CD8-positive, alpha-beta T cell (primary cell): ENCODE measurements at regions of chr3 and their contacts with region 1.

Region 1: GRCh38 chr3:47989981-47990440 is 26.2 kb downstream of the MAP4 start:
- DNase-seq: peak; percentile 27 to 84 (median 69)
- ATAC-seq: peak; percentile 97
- H3K4me3 ChIP-seq: no peak overlapping the region
- H3K4me3 Mint-ChIP-seq: no peak overlapping the region
- H3K27ac ChIP-seq: no peak overlapping the region
- H3K27ac Mint-ChIP-seq: no peak overlapping the region
- H3K4me1 ChIP-seq: no peaks in the 10 kb centered on the region
- H3K4me1 Mint-ChIP-seq: peaks cover 1% of the 10 kb centered on the region
- H3K27me3 ChIP-seq: no peaks in the 10 kb centered on the region
- H3K27me3 Mint-ChIP-seq: no peaks in the 10 kb centered on the region
- CTCF ChIP-seq: peak; percentile 85

Region 2: DNA sequence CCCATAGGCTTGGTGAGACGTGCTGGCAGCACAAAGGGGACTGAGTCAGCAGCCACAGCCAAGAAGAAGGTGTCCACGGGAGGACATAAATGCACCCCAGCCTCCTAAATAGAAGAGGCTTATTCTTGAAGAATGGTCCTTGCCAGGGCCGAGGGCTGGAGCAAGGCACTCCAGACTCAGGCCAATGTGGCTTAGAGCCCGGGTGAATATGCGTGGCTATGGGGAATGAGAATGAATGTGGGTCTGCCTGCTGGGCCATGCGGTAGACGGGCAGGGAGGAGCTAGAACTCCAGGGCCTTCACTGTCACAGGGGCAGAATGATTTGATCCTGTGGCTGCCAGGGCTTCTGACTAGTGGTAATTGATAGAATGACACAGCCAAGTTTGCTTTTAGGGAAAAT is 153.0 kb before region 1 on chr3:
- CTCF ChIA-PET with region 1: interaction called, 38 read pairs
- POLR2A ChIA-PET with region 1: no interaction called
- intact Hi-C with region 1: loop called (anchors 1 kb)
- DNase-seq: no peak
- ATAC-seq: no peak
- H3K4me3 ChIP-seq: no peak overlapping the region
- H3K4me3 Mint-ChIP-seq: no peak overlapping the region
- H3K27ac ChIP-seq: no peak overlapping the region
- H3K27ac Mint-ChIP-seq: no peak overlapping the region
- H3K4me1 ChIP-seq: no peaks in the 10 kb centered on the region
- H3K4me1 Mint-ChIP-seq: peaks cover 2% of the 10 kb centered on the region
- H3K27me3 ChIP-seq: no peaks in the 10 kb centered on the region
- H3K27me3 Mint-ChIP-seq: no peaks in the 10 kb centered on the region
- CTCF ChIP-seq: no peak

Region 3: DNA sequence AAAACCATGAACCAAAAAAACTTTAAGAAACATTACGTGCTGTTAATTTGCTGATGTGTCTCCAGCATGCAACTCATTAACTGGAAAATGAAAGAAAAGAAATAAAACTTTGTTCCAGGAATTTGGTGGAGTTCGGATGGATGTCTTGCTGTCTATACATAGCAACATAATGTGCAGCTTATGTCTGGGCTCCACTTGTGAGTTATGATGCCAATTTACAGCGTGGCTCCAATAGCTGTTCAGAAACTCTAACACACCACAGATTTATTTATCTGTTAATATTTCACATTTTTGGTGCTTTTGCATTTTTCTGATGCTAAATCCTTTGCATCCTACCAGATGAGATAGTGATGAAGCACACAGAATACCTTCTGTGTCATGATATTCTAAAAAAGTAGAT is 18.9 kb before region 1 on chr3:
- CTCF ChIA-PET with region 1: interaction called, 15 read pairs
- POLR2A ChIA-PET with region 1: no interaction called
- intact Hi-C with region 1: no loop called
- DNase-seq: no peak
- ATAC-seq: no peak
- H3K4me3 ChIP-seq: no peak overlapping the region
- H3K4me3 Mint-ChIP-seq: no peak overlapping the region
- H3K27ac ChIP-seq: no peak overlapping the region
- H3K27ac Mint-ChIP-seq: no peak overlapping the region
- H3K4me1 ChIP-seq: no peaks in the 10 kb centered on the region
- H3K4me1 Mint-ChIP-seq: no peaks in the 10 kb centered on the region
- H3K27me3 ChIP-seq: no peaks in the 10 kb centered on the region
- H3K27me3 Mint-ChIP-seq: no peaks in the 10 kb centered on the region
- CTCF ChIP-seq: no peak

Region 4: GRCh38 chr3:48000212-48000611 is 10.2 kb after region 1 on chr3:
- CTCF ChIA-PET with region 1: interaction called, 22 read pairs
- POLR2A ChIA-PET with region 1: no interaction called
- intact Hi-C with region 1: no loop called
- DNase-seq: no peak
- ATAC-seq: no peak
- H3K4me3 ChIP-seq: no peak overlapping the region
- H3K4me3 Mint-ChIP-seq: no peak overlapping the region
- H3K27ac ChIP-seq: no peak overlapping the region
- H3K27ac Mint-ChIP-seq: no peak overlapping the region
- H3K4me1 ChIP-seq: no peaks in the 10 kb centered on the region
- H3K4me1 Mint-ChIP-seq: peaks cover 7% of the 10 kb centered on the region
- H3K27me3 ChIP-seq: no peaks in the 10 kb centered on the region
- H3K27me3 Mint-ChIP-seq: no peaks in the 10 kb centered on the region
- CTCF ChIP-seq: no peak

Region 5: GRCh38 chr3:48151058-48151806 is 161.2 kb after region 1 on chr3:
- CTCF ChIA-PET with region 1: interaction called, 4 read pairs
- POLR2A ChIA-PET with region 1: no interaction called
- intact Hi-C with region 1: loop called (anchors 1 to 5 kb)
- DNase-seq: peak; percentile 13 to 69 (median 52)
- ATAC-seq: peak; percentile 85
- H3K4me3 ChIP-seq: no peak overlapping the region
- H3K4me3 Mint-ChIP-seq: no peak overlapping the region
- H3K27ac ChIP-seq: no peak overlapping the region
- H3K27ac Mint-ChIP-seq: no peak overlapping the region
- H3K4me1 ChIP-seq: no peaks in the 10 kb centered on the region
- H3K4me1 Mint-ChIP-seq: no peaks in the 10 kb centered on the region
- H3K27me3 ChIP-seq: no peaks in the 10 kb centered on the region
- H3K27me3 Mint-ChIP-seq: peaks cover 3% of the 10 kb centered on the region
- CTCF ChIP-seq: peak; percentile 45